ENCODE measurements at regions of chr14 and their contacts with region 1.

Region 1: GRCh38 chr14:69460093-69460701 is 24.3 kb upstream of the PLEKHD1 start:
- H3K4me3 Mint-ChIP-seq: no peak overlapping the region
- H3K27ac Mint-ChIP-seq: no peak overlapping the region
- H3K4me1 Mint-ChIP-seq: no peaks in the 10 kb centered on the region
- H3K27me3 Mint-ChIP-seq: no peaks in the 10 kb centered on the region

Region 2: DNA sequence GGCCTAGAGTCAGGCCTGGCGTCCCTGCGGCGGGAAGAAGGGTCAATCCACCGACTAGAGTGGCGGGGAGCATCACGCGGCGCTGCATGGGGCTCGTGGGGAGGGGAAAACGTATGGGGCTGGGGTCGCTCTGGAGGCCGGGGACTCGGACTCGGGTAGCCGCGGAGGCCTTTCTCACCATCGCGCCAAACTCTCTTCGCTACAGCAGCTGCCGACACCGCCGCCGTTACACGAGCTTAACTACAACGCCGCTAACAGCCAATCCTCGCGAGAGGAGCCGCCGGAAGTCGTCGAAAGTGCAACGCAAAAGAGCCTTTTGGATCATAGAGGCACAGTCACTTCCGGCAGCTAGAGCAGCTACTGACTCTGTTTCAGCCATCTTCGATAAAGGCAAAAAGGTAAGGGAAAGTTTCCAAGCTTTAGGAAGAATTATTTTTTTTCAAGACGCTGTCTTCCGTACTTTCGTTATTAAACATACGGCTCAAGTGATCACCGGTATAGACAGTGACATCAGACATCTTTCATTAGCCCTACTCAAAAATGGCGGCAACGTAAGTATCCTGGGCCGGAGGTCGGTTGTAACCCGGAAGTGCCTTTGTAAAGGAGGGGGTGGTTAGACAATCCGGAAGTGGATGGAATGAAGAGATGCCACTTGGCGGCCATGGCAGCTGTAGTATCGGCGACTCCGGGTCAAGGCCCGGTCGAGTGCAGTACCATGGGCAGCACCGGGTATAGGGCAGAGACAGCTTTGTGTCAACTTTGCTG is 62.0 kb before region 1 on chr14 and contains the starts of genes ERH and SLC39A9:
- intact Hi-C with region 1: loop called (anchors 1 kb)
- H3K4me3 Mint-ChIP-seq: peak within 1 kb of the TSS; percentile 89
- H3K27ac Mint-ChIP-seq: peak within 1 kb of the TSS; percentile 95
- H3K4me1 Mint-ChIP-seq: peaks cover 29% of the 10 kb centered on the region
- H3K27me3 Mint-ChIP-seq: no peaks in the 10 kb centered on the region